ENCODE measurements at regions of chr2 and their contacts with region 1.

Region 1: DNA sequence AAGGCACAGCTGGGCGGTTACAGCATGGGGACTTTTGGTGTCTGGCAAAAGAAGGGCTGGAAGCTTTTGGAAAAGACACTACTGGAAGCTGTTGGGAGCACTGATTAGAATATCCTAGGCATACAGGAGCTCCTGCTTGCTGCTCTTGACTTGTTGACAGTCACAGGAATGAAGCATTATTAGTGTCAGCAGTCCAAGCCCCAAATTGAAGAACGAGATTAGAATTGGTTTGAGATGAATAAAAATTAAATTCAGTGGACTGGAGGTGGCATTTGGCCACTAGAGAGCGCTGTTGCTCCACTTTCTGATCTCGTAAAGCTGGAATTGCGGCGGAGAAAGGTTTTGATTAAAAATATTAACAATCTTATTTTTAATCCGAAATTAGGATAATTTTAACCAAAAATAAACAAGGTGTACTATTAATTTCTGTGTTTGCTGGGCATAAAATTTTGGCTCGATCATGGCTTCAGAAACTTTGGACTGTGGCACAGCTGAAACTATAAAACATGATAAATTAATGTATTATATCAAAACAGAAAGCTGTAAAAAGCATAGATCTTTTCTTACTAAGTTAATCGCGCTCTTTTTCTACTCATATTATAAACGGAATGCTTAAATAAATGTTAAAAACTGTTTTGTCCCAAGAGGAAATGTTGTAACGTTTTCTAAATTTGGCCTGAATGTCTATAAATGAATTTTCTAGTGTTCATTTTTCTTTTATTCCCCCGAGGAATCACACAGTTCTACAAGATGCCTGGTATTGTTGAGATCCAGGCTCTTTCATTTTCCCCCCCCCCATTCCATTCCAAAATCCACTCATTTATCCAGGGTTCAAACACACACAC is 2.4 kb upstream of the HOXD8 start:
- DNase-seq: peak; percentile 70
- ATAC-seq: no peak

Region 2: DNA sequence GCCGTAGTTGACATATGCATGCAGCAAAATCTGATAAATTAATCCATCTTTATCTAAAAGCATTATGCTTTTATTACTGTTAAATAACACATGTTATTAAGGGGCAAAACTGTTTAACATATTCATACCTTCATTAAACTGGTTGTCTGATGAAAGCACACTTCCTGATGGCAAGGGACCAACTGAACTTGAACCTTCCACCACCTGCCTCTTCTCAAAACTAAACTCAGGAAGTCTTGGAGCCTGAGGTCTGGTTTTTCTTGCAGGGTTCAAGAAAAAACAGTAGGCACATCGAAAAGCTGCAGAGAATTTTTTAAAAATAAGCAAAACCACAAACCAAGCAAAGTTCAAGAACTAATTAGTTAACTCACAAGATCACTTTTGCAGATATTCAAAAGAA is 189.9 kb before region 1 on chr2:
- intact Hi-C with region 1: no loop called
- DNase-seq: no peak
- ATAC-seq: no peak

Region 3: DNA sequence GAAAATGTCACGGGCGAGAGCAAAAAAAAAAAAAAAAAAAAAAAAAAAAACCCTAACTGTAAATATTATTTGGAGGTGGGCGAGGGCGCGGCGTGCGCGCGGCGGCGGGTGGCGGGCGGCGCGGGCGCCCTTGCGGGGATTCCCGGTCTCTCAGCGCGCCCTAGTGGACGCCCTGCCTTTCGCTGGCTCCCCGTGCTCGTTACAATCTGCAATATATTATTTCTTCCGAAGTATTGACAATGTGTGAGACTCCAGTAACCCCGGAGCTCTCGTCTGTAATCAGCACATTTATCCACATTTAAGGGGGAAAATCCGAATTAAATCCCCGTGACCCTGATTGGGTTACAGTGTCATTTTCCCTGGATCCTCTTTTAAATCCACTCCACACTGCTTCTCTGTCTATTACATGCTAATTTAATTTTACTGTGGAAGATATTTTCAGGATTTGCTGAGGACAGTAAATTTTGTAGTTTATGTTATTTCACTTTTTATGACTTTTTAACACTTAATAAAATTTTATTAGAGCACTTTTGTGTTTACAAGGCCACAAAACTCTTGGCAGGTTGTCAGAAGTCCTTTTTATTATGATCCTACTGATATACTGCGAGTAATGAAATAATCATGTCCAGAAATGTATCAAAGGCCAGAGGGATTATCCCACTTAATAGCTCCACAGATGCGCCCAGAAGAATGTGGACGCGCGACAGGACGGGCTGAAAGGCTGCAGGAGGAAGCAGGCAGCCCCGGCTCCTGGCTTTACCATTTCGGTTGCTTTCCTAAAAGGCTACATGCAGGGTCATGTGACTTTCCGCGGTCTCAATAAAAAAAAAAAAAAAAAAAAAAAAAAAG is 511.2 kb after region 1 on chr2:
- intact Hi-C with region 1: loop called (anchors 5 kb)
- DNase-seq: peak; percentile 81
- ATAC-seq: peak; percentile 95